ENCODE measurements at regions of chr18 and their contacts with region 1.

Region 1: DNA sequence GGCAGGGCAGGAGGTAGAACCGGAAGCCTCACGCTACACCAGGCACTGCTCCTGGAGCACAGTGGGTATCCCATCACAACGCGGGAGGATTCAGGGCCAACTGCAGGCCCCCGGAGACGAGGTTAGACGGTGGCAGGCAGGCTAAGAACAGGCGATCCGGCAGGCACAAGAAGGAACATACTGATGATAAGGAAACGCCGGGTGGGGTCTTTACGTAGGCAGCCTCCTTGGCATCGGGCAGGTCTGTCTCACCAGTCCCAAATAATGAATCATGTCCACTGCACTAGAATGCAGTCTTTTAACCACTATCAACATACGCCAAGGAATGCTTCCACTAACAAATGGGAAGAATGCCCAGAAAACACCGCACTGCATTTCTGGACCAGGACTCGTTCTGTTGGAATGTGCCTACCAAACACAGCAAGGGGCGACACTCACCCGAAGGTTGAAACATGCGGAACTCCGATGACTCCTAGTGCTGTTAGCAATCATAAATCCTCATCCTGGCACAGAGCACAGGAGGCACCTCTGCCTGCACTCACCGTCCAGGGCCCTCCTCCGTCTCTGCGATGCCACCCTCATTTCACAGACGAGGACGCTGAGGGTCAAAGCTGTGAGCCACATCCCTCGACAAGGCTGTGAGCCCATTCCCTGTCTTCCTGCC is 35.2 kb downstream of the ZNF516 start:
- DNase-seq: peak in 1 of 2 donors; percentile 94
- H3K4me3 ChIP-seq: peak overlapping the region; percentile 36 to 51
- H3K27ac ChIP-seq: peak overlapping the region; percentile 78 to 96
- H3K4me1 ChIP-seq: peaks cover 0 to 12% of the 10 kb centered on the region in 2 donors
- H3K27me3 ChIP-seq: no peaks in the 10 kb centered on the region
- CTCF ChIP-seq: no peak

Region 2: DNA sequence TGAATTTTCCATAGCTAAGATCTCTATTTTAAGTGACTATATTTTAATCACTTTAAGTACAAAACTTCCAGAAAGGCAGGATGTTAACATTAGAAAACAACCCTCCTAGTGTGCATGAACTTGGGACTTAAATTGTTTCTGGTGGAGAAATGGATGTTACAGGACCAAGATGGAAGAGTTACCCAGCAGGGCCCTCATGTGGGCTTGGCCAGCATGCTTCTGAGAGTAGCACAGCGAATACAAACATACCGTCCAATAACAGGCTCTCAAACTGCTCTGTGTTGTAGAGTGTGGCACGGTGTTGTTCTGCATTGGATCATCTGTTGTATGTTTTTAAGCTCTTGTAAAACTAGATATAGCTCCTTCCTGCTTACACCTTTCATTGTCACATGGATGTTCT is 686.2 kb before region 1 on chr18:
- intact Hi-C with region 1: no loop called
- DNase-seq: no peak
- H3K4me3 ChIP-seq: no peak overlapping the region
- H3K27ac ChIP-seq: no peak overlapping the region
- H3K4me1 ChIP-seq: no peaks in the 10 kb centered on the region
- H3K27me3 ChIP-seq: no peaks in the 10 kb centered on the region
- CTCF ChIP-seq: no peak

Region 3: GRCh38 chr18:76476665-76477561 is 17.1 kb after region 1 on chr18:
- intact Hi-C with region 1: loop called (anchors 2 kb)
- DNase-seq: no peak
- H3K4me3 ChIP-seq: peak overlapping the region; percentile 28 to 48
- H3K27ac ChIP-seq: peak overlapping the region; percentile 42 to 63
- H3K4me1 ChIP-seq: peaks cover 0 to 9% of the 10 kb centered on the region in 2 donors
- H3K27me3 ChIP-seq: no peaks in the 10 kb centered on the region
- CTCF ChIP-seq: no peak

Region 4: GRCh38 chr18:76565238-76566180 is 105.7 kb after region 1 on chr18:
- intact Hi-C with region 1: loop called (anchors 1 kb)
- DNase-seq: peak; percentile 37 to 87
- H3K4me3 ChIP-seq: peak overlapping the region; percentile 50 to 53
- H3K27ac ChIP-seq: peak overlapping the region; percentile 67 to 82
- H3K4me1 ChIP-seq: peaks cover 0 to 7% of the 10 kb centered on the region in 2 donors
- H3K27me3 ChIP-seq: no peaks in the 10 kb centered on the region
- CTCF ChIP-seq: no peak

Region 5: GRCh38 chr18:76620321-76621170 is 160.7 kb after region 1 on chr18:
- intact Hi-C with region 1: loop called (anchors 5 kb)
- DNase-seq: peak; percentile 40 to 88
- H3K4me3 ChIP-seq: peak overlapping the region; percentile 54 to 67
- H3K27ac ChIP-seq: peak overlapping the region; percentile 58 to 60
- H3K4me1 ChIP-seq: peaks cover 4 to 8% of the 10 kb centered on the region in 2 donors
- H3K27me3 ChIP-seq: no peaks in the 10 kb centered on the region
- CTCF ChIP-seq: peak; percentile 52 to 78 (median 54)